Calu3 (cell line): ENCODE measurements at regions of chr2 and their contacts with region 1.

Region 1: GRCh38 chr2:197168705-197169104 is 141.9 kb downstream of the ANKRD44 start:
- DNase-seq: peak; percentile 74
- H3K4me3 Mint-ChIP-seq: no peak overlapping the region
- H3K27ac Mint-ChIP-seq: no peak overlapping the region
- H3K4me1 Mint-ChIP-seq: peaks cover 23% of the 10 kb centered on the region
- H3K27me3 Mint-ChIP-seq: no peaks in the 10 kb centered on the region
- CTCF ChIP-seq: peak; percentile 68

Region 2: DNA sequence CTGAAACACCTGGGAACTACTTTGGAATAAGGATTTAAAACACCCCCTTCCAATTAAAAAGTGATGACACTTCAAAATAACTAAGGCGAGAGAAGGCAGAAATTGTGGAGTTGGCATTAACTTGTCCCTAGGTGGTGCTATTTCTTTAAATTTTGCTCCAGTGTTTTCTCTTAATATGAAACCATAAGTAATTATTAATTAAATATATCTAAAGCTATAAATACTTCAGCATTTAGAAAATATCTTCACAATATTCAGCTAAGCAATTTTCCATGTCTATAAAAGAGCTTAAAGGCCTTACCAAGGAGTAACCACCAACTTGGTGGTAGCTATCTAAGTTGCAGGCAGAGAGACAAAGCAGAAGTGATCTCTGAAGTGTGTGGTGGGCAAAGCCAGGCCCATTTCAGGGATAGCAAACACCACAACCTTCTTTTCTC is 55.4 kb before region 1 on chr2:
- CTCF ChIA-PET with region 1: interaction called, 28 read pairs
- intact Hi-C with region 1: loop called (anchors 1 kb)
- DNase-seq: no peak
- H3K4me3 Mint-ChIP-seq: no peak overlapping the region
- H3K27ac Mint-ChIP-seq: no peak overlapping the region
- H3K4me1 Mint-ChIP-seq: no peaks in the 10 kb centered on the region
- H3K27me3 Mint-ChIP-seq: no peaks in the 10 kb centered on the region
- CTCF ChIP-seq: peak; percentile 67